HCT116 (cell line): ENCODE measurements at regions of chr20 and their contacts with region 1.

Region 1: DNA sequence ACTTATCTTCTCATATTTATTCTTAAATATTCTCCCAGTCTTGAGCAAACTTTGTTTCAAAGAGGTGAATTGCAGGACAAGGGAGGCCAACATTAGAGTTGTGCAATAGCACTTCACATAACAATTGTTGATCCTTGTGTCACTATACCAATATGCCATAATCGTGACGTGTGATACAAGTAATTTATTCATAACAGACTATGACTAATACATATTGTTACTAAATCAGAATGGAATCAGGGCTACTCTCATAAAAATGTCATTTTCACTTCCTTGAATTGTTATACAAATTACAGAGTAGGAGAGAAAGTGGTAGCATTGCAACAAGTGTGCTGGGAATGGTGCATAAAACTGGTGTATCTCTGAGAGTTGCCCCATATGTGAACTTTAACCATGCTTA is 37.2 kb upstream of the PLCB1 start:
- DNase-seq: no peak
- ATAC-seq: no peak
- H3K4me3 ChIP-seq: no peak overlapping the region
- H3K27ac ChIP-seq: no peak overlapping the region
- H3K4me1 ChIP-seq: no peaks in the 10 kb centered on the region
- H3K27me3 ChIP-seq: no peaks in the 10 kb centered on the region
- CTCF ChIP-seq: no peak
- POLR2A ChIP-seq: no peak
- RAD21 ChIP-seq: no peak

Region 2: DNA sequence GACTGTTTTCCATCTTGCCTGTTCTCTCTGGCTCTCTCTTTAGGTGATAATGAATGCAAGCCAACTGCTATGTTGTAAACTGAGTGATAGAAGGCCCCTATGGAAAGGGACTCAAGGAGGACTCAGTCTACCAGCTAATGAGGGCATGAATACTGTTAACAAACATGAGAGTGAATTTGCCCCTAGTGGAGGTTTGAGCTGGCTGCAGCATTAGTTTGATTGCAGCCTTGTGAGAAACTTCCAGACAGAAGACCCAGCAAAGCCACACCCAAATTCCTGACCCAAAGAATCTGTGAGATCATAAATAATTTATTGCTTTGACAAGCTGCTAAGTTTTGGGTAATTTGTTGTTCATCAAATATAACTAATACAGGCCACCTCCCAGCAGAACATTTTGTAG is 12.8 kb before region 1 on chr20:
- CTCF ChIA-PET with region 1: interaction called, 13 read pairs
- POLR2A ChIA-PET with region 1: no interaction called
- RAD21 ChIA-PET with region 1: no interaction called
- intact Hi-C with region 1: no loop called
- DNase-seq: peak; percentile 7
- ATAC-seq: peak; percentile 87
- H3K4me3 ChIP-seq: no peak overlapping the region
- H3K27ac ChIP-seq: no peak overlapping the region
- H3K4me1 ChIP-seq: no peaks in the 10 kb centered on the region
- H3K27me3 ChIP-seq: no peaks in the 10 kb centered on the region
- CTCF ChIP-seq: peak in 2 of 3 experiments; percentile 65 to 67; a peak in 4 of 6 replicates
- POLR2A ChIP-seq: no peak
- RAD21 ChIP-seq: no peak

Region 3: GRCh38 chr20:8505476-8506200 is 410.8 kb after region 1 on chr20:
- CTCF ChIA-PET with region 1: no interaction called
- POLR2A ChIA-PET with region 1: no interaction called
- RAD21 ChIA-PET with region 1: no interaction called
- intact Hi-C with region 1: no loop called
- DNase-seq: no peak
- ATAC-seq: no peak
- H3K4me3 ChIP-seq: no peak overlapping the region
- H3K27ac ChIP-seq: no peak overlapping the region
- H3K4me1 ChIP-seq: no peaks in the 10 kb centered on the region
- H3K27me3 ChIP-seq: no peaks in the 10 kb centered on the region
- CTCF ChIP-seq: no peak
- POLR2A ChIP-seq: no peak
- RAD21 ChIP-seq: no peak